ENCODE measurements at regions of chr12 and their contacts with region 1.

Region 1: GRCh38 chr12:49776413-49776812 is 35.1 kb downstream of the TMBIM6 start:
- DNase-seq: peak; percentile 79 to 85
- ATAC-seq: peak; percentile 89
- H3K4me3 ChIP-seq: no peak overlapping the region
- H3K27ac ChIP-seq: no peak overlapping the region
- H3K4me1 ChIP-seq: no peaks in the 10 kb centered on the region
- H3K27me3 ChIP-seq: no peaks in the 10 kb centered on the region

Region 2: GRCh38 chr12:49322708-49323523 is 453.5 kb before region 1 on chr12 and contains the start of gene TROAP:
- intact Hi-C with region 1: no loop called
- DNase-seq: peak; percentile 99
- ATAC-seq: peak; percentile 100
- H3K4me3 ChIP-seq: peak within 1 kb of the TSS; percentile 51 to 85
- H3K27ac ChIP-seq: no peak within 1 kb of the TSS
- H3K4me1 ChIP-seq: no peaks in the 10 kb centered on the region
- H3K27me3 ChIP-seq: no peaks in the 10 kb centered on the region
- total RNA-seq, gene TROAP: 1.1 to 4.3 TPM

Region 3: GRCh38 chr12:49583366-49584094 is 192.9 kb before region 1 on chr12:
- intact Hi-C with region 1: no loop called
- DNase-seq: no peak
- ATAC-seq: no peak
- H3K4me3 ChIP-seq: no peak overlapping the region
- H3K27ac ChIP-seq: no peak overlapping the region
- H3K4me1 ChIP-seq: no peaks in the 10 kb centered on the region
- H3K27me3 ChIP-seq: no peaks in the 10 kb centered on the region

Region 4: GRCh38 chr12:49828133-49829091 is 52.0 kb after region 1 on chr12 and contains the start of gene NCKAP5L:
- intact Hi-C with region 1: loop called in 1 of 2 experiments (anchors 5 kb)
- DNase-seq: peak; percentile 99
- ATAC-seq: peak; percentile 97
- H3K4me3 ChIP-seq: peak within 1 kb of the TSS; percentile 77 to 79
- H3K27ac ChIP-seq: peak within 1 kb of the TSS; percentile 74
- H3K4me1 ChIP-seq: peaks cover 0 to 2% of the 10 kb centered on the region in 2 donors
- H3K27me3 ChIP-seq: no peaks in the 10 kb centered on the region
- total RNA-seq, gene NCKAP5L: 22.2 to 38.7 TPM

Region 5: GRCh38 chr12:49838973-49839633 is 62.7 kb after region 1 on chr12:
- intact Hi-C with region 1: loop called in 1 of 2 experiments (anchors 2 kb)
- DNase-seq: no peak
- ATAC-seq: no peak
- H3K4me3 ChIP-seq: no peak overlapping the region
- H3K27ac ChIP-seq: no peak overlapping the region
- H3K4me1 ChIP-seq: no peaks in the 10 kb centered on the region
- H3K27me3 ChIP-seq: no peaks in the 10 kb centered on the region

Region 6: GRCh38 chr12:49882851-49883470 is 106.5 kb after region 1 on chr12:
- intact Hi-C with region 1: no loop called
- DNase-seq: peak; percentile 32 to 43
- ATAC-seq: no peak
- H3K4me3 ChIP-seq: no peak overlapping the region
- H3K27ac ChIP-seq: no peak overlapping the region
- H3K4me1 ChIP-seq: no peaks in the 10 kb centered on the region
- H3K27me3 ChIP-seq: no peaks in the 10 kb centered on the region

Measured in aorta (tissue), 5 donors.